ENCODE measurements at regions of chr7 and their contacts with region 1.

Region 1: DNA sequence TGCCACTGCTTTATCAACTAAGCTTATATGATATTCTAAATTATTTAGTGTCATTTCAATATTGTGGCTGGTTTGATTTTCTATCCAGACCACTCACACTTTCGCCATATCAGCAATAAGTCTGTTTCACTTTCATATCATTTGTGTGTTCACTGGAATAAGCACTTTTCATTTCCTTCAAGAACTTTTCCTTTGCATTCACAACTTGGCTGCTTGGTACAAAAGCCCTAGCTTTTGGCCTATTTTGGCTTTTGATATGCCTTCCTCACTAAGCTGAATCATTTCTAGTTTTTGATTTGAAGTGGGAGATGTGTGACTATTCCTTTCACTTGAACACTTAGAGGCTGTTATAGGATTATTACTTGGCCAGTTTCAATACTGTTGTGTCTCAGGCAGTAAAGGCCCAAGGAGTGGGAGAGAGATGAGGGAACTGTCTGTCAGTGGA is 120.9 kb upstream of the NAMPT start:
- DNase-seq: no peak
- H3K4me3 Mint-ChIP-seq: no peak overlapping the region
- H3K27ac Mint-ChIP-seq: peak overlapping the region; percentile 67
- H3K4me1 Mint-ChIP-seq: peaks cover 28% of the 10 kb centered on the region
- H3K27me3 Mint-ChIP-seq: peaks cover 4% of the 10 kb centered on the region

Region 2: GRCh38 chr7:106257752-106258151 is 148.0 kb before region 1 on chr7:
- intact Hi-C with region 1: loop called (anchors 5 kb)
- DNase-seq: no peak
- H3K4me3 Mint-ChIP-seq: no peak overlapping the region
- H3K27ac Mint-ChIP-seq: peak overlapping the region; percentile 25
- H3K4me1 Mint-ChIP-seq: peaks cover 63% of the 10 kb centered on the region
- H3K27me3 Mint-ChIP-seq: no peaks in the 10 kb centered on the region

Region 3: DNA sequence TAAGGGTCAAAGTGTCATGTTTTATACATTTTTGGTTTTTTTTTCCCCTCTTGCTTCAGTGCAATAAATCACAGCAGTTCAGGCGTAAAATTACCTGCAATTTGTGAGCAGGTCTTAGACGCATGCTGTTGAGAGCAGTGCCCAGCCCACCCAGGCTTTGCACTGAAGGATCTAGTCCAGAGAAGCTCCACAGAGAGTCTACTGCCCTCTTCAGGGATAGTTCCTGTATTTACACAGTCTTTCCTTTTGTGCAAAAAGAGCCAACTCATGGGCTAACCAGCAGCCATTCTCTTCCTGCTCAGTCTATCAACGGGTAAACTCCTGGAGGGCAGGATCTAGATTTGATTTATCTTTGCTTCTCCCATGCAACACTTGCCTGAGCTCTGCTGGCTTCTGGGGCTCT is 38.7 kb before region 1 on chr7:
- intact Hi-C with region 1: loop called (anchors 5 kb)
- DNase-seq: no peak
- H3K4me3 Mint-ChIP-seq: no peak overlapping the region
- H3K27ac Mint-ChIP-seq: peak overlapping the region; percentile 38
- H3K4me1 Mint-ChIP-seq: peaks cover 26% of the 10 kb centered on the region
- H3K27me3 Mint-ChIP-seq: peaks cover 18% of the 10 kb centered on the region

Region 4: DNA sequence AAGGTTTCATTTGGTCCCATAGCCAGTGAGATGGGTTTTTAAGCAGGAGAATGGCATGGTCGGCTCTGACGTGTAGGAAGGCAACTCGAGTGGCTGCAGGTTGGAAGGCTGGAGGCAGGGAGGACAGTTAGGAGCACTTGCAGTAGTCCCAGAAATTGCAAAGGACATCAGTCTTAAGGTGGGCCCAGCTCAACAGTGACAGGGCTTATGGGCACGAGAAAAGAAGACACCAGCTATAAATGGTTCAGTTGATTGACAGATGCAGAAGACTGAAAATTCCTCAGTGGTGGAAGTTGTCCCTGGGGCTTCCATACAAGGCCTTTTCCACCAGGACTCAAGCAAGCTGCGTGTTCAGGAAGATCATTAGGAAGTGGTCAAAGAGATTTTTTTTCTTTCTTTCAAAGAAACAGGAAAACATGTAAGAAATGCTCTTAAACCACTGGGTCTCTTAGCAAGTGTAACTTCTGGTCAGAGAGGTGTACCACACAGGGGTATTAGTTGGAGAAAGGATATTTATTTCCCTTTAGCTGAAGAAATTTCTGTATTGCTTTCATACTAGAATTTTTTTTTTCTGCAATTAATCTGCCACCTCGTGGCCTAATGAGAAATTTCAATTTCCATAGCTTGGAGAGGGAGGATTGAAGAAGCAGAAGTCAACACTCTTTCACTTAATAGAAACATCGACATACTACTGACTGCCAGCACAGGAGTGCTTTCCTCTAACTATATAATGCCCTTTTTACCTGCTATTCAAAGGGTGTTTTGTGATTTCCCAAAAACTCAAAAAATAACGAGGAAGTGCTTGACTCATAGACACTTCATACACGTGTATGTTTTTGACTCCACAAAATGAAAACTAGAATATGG is 56.5 kb after region 1 on chr7:
- intact Hi-C with region 1: loop called (anchors 1 kb)
- DNase-seq: no peak
- H3K4me3 Mint-ChIP-seq: no peak overlapping the region
- H3K27ac Mint-ChIP-seq: no peak overlapping the region
- H3K4me1 Mint-ChIP-seq: peaks cover 16% of the 10 kb centered on the region
- H3K27me3 Mint-ChIP-seq: no peaks in the 10 kb centered on the region